ENCODE measurements at regions of chr15 and their contacts with region 1.

Region 1: GRCh38 chr15:68550481-68551295 is 28.1 kb upstream of the CORO2B start:
- DNase-seq: peak; percentile 84
- ATAC-seq: peak; percentile 51
- H3K4me3 Mint-ChIP-seq: no peak overlapping the region
- H3K27ac Mint-ChIP-seq: no peak overlapping the region
- H3K4me1 Mint-ChIP-seq: no peaks in the 10 kb centered on the region
- H3K27me3 Mint-ChIP-seq: peaks cover 20% of the 10 kb centered on the region

Region 2: GRCh38 chr15:68518046-68518445 is 32.6 kb before region 1 on chr15:
- CTCF ChIA-PET with region 1: interaction called, 13 read pairs
- POLR2A ChIA-PET with region 1: no interaction called
- DNase-seq: no peak
- ATAC-seq: no peak
- H3K4me3 Mint-ChIP-seq: no peak overlapping the region
- H3K27ac Mint-ChIP-seq: no peak overlapping the region
- H3K4me1 Mint-ChIP-seq: no peaks in the 10 kb centered on the region
- H3K27me3 Mint-ChIP-seq: peaks cover 34% of the 10 kb centered on the region

Region 3: GRCh38 chr15:68526269-68526668 is 24.4 kb before region 1 on chr15:
- CTCF ChIA-PET with region 1: interaction called, 21 read pairs
- POLR2A ChIA-PET with region 1: no interaction called
- DNase-seq: no peak
- ATAC-seq: peak; percentile 76
- H3K4me3 Mint-ChIP-seq: no peak overlapping the region
- H3K27ac Mint-ChIP-seq: no peak overlapping the region
- H3K4me1 Mint-ChIP-seq: peaks cover 41% of the 10 kb centered on the region
- H3K27me3 Mint-ChIP-seq: peaks cover 25% of the 10 kb centered on the region

Region 4: GRCh38 chr15:68536331-68537095 is 14.2 kb before region 1 on chr15:
- CTCF ChIA-PET with region 1: interaction called, 54 read pairs
- POLR2A ChIA-PET with region 1: no interaction called
- DNase-seq: no peak
- ATAC-seq: no peak
- H3K4me3 Mint-ChIP-seq: no peak overlapping the region
- H3K27ac Mint-ChIP-seq: no peak overlapping the region
- H3K4me1 Mint-ChIP-seq: peaks cover 2% of the 10 kb centered on the region
- H3K27me3 Mint-ChIP-seq: peaks cover 21% of the 10 kb centered on the region

Region 5: GRCh38 chr15:68672781-68673205 is 122.1 kb after region 1 on chr15:
- CTCF ChIA-PET with region 1: interaction called, 74 read pairs
- POLR2A ChIA-PET with region 1: no interaction called
- DNase-seq: no peak
- ATAC-seq: no peak
- H3K4me3 Mint-ChIP-seq: no peak overlapping the region
- H3K27ac Mint-ChIP-seq: no peak overlapping the region
- H3K4me1 Mint-ChIP-seq: peaks cover 4% of the 10 kb centered on the region
- H3K27me3 Mint-ChIP-seq: peaks cover 15% of the 10 kb centered on the region

Region 6: GRCh38 chr15:68924866-68925560 is 374.3 kb after region 1 on chr15:
- CTCF ChIA-PET with region 1: interaction called, 14 read pairs
- POLR2A ChIA-PET with region 1: no interaction called
- DNase-seq: peak; percentile 70
- ATAC-seq: peak; percentile 55
- H3K4me3 Mint-ChIP-seq: no peak overlapping the region
- H3K27ac Mint-ChIP-seq: no peak overlapping the region
- H3K4me1 Mint-ChIP-seq: no peaks in the 10 kb centered on the region
- H3K27me3 Mint-ChIP-seq: peaks cover 27% of the 10 kb centered on the region